Activated naive CD4-positive, alpha-beta T cell treated with anti-CD3 and anti-CD28 coated beads for 36 hours (primary cell): ENCODE measurements at regions of chr6 and their contacts with region 1.

Region 1: DNA sequence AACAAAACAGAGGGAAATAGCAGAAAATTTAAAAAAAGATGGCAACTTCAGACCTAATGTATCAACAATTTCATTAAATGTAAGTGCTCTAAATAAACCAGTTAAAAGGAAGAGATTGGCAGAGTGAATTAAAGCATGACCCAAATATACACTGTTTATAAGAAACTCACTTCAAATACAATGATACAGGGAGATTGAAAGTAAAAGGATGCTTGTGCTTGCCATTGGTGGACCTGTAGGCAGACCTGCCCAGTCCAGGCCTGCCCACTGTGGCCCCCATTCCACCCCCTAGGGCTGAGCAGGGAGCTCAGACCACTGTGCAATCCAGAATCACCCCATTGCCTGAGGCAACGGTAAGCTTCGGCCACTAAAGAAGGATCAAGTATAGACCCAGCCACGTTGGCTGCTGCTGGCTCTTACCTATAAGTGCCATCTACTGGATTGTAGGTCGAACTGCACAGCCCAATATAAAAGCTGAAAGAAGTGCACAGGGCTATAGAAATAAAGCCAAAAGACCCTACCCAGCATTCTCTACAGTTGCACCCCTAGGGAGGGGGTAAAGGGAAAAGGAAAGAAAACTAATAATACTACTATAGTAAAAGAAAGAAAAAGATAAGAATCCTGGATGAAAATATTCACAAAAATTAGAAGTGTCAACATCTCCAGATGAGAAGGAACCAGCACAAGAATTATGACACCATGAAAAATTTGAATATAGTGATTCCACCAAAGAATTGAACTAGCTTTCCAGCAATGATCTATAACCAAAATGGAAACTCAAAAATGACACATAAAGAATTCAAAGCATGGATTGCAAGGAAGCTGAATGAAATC is 36.1 kb downstream of the PSMB1 start:
- DNase-seq: peak; percentile 54
- H3K4me3 Mint-ChIP-seq: peak overlapping the region; percentile 28
- H3K27ac Mint-ChIP-seq: no peak overlapping the region
- H3K4me1 Mint-ChIP-seq: no peaks in the 10 kb centered on the region
- H3K27me3 Mint-ChIP-seq: peaks cover 24% of the 10 kb centered on the region

Region 2: DNA sequence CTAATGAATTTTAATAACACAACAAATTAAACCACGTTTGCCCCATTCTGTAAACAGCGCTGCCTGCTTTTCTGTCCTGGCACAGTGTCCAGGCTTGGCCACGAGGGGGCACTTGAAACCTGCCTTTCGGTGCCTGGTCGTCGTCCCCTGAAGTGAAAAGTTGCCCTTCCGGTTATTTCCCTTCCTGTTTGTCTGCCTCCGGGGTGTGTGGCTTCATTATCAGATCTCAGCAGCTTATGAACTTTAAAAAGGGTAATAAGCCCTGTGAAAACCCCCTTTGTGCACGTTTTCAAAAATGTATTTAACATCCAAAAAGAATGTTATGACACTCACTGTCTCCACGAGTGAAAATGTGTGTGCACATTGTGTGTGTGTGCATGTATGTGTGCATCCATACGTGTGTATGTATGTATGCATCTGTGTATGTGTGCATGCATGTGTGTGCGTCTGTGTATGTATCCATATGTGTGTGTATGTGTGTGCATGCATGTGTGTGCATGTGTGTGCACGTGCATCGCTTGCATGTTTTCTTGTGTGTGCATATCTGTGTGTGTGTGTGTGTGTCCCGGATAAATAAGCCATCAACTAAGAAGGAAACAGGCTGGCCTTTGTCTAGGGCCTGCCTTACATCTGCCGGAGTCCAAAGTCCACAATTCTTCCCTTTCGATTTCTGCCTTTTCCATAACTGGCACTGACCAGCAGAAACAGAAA is 1621.7 kb before region 1 on chr6:
- CTCF ChIA-PET with region 1: interaction called, 3 read pairs
- intact Hi-C with region 1: loop called (anchors 5 kb)
- DNase-seq: peak; percentile 89
- H3K4me3 Mint-ChIP-seq: no peak overlapping the region
- H3K27ac Mint-ChIP-seq: no peak overlapping the region
- H3K4me1 Mint-ChIP-seq: peaks cover 14% of the 10 kb centered on the region
- H3K27me3 Mint-ChIP-seq: no peaks in the 10 kb centered on the region

Region 3: DNA sequence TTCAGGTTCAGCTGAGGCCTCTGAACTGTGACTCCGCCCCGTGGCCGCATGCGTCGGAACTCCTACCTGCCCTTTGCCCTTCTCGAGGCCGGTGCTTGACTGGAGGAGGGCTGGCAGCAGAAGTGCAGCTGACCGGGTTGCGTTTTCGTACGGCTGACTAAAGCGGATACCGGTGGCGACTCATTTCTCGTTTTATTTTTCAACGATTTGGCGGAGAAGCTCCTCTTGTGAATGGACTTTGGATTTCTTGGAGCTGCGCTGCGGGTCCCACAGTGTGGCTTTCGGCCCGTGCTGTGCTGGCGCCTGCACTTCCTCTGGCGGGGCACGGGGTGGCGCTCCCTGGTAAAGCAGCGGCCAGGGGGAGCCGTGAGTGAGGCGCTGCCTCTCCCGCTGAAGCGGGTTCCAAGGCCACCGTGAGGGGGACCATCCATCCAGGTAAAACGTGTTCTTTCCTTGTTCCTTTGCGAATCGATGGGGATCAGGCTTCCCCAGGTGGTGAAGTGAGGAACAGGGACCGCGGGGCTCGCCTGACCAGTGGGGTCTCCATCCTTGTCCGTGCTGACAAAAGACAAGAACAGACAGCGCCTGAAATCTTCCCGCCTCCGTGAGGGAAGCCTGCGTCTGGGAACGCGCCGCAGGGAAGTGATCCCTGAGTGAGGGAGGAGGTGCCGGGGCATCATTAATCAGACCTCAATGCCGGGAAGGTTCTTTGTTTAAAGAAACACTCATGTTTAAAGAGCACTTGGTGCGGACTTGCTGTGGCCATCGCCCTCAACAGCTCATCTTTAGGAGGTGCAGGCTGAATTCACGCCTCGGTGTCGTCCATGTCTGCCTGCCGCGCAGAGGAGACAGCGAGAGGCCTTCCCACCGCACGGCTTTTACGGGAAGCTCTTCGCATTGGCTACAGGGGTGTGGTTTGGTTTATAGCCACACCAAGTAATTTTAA is 726.7 kb before region 1 on chr6:
- CTCF ChIA-PET with region 1: interaction called, 7 read pairs
- intact Hi-C with region 1: loop called (anchors 1 kb)
- DNase-seq: peak; percentile 80
- H3K4me3 Mint-ChIP-seq: peak overlapping the region; percentile 79
- H3K27ac Mint-ChIP-seq: no peak overlapping the region
- H3K4me1 Mint-ChIP-seq: peaks cover 17% of the 10 kb centered on the region
- H3K27me3 Mint-ChIP-seq: peaks cover 24% of the 10 kb centered on the region

Region 4: DNA sequence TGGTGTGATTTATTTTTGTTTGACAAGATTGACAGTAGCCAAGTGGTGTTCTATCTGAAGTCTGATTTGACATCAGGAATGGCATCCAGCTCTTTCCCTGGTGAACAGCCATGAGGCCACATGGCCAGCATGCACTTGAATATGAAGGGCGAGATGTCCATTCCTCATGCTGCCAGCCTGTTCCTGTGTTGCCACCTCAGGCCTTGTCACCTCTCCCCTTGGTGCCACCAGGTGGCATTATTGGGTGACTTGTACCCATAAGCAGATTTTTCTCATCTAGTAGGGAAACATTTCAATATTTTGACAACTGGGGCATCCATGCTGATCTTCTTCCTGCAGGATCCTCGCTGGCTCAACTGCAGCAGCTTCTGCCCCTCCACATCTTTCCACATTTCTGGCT is 566.4 kb before region 1 on chr6:
- CTCF ChIA-PET with region 1: interaction called, 11 read pairs
- intact Hi-C with region 1: loop called (anchors 1 kb)
- DNase-seq: peak; percentile 66
- H3K4me3 Mint-ChIP-seq: no peak overlapping the region
- H3K27ac Mint-ChIP-seq: no peak overlapping the region
- H3K4me1 Mint-ChIP-seq: no peaks in the 10 kb centered on the region
- H3K27me3 Mint-ChIP-seq: no peaks in the 10 kb centered on the region

Region 5: DNA sequence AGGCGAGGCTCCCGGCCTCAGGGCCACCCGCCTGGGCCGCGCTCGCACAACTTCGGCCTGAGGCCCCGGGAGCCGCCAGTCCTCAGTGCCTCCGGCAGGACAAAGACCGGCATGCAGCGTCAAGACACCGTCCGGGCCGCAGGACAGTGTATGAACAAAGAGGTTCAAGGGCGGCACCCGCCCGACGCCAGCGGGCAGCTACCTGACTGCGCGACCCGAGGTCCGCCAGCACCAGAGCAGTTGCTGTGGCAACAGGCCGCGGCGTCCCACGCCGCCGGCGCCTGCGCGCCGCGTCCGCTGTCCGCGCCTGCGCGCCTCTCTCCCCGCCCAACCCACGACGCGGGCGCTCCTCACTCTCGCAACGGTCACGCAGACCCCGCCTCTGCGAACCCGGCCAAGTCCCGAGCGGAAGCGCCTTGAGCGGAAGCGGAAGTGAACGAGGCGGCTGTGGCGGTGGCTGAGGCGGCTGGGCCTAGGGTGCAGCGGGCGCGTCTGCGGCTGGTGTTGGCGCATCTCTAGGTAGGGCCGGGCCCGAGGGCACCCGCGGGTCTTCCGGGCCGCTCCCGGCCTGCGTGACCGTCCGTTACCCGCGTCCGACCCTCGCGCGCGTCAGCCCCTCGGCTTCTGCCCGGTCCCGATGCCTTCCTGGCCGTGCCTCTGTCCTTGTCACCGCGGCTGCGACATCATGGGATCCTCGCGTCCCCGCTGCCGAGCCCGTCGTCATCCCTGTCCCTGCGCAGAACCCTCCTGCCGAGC is 210.5 kb before region 1 on chr6 and contains the start of gene FAM120B:
- CTCF ChIA-PET with region 1: no interaction called
- intact Hi-C with region 1: loop called (anchors 5 kb)
- DNase-seq: peak; percentile 92
- H3K4me3 Mint-ChIP-seq: peak within 1 kb of the TSS; percentile 86
- H3K27ac Mint-ChIP-seq: peak within 1 kb of the TSS; percentile 81
- H3K4me1 Mint-ChIP-seq: peaks cover 36% of the 10 kb centered on the region
- H3K27me3 Mint-ChIP-seq: peaks cover 4% of the 10 kb centered on the region
- total RNA-seq, gene FAM120B: 15.5 to 16.1 TPM

Region 6: DNA sequence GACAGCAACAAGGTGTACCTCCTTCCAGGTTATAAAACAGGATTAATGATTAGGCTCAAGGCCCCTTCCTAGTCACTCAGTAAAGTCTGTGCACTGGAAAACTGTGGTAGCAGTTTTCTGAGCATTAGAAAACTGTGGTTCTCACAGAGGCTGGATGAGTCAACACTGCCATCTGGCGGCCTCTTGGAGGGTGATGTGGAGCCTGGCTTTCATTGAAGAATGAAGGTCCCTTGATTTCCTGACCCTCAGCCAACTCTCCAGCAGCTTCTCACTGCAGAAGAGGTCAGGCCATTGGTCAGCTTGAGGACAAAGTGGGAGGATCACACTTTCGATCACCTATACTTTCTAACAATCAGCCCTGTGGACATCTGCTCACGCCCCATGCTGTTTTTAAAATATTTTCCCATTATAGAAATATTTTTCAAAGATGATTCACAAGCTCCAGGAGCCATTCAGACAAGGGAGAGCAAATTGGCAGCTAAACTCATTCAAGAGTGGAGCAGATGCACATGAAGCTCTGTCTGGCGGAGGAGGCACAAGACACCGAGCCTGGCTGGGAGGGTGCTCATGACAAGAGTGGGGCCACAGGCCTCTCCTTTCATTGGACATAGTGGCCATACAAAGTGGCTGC is 13.0 kb after region 1 on chr6:
- CTCF ChIA-PET with region 1: interaction called, 20 read pairs
- intact Hi-C with region 1: no loop called
- DNase-seq: peak; percentile 84
- H3K4me3 Mint-ChIP-seq: no peak overlapping the region
- H3K27ac Mint-ChIP-seq: no peak overlapping the region
- H3K4me1 Mint-ChIP-seq: no peaks in the 10 kb centered on the region
- H3K27me3 Mint-ChIP-seq: no peaks in the 10 kb centered on the region

Region 7: DNA sequence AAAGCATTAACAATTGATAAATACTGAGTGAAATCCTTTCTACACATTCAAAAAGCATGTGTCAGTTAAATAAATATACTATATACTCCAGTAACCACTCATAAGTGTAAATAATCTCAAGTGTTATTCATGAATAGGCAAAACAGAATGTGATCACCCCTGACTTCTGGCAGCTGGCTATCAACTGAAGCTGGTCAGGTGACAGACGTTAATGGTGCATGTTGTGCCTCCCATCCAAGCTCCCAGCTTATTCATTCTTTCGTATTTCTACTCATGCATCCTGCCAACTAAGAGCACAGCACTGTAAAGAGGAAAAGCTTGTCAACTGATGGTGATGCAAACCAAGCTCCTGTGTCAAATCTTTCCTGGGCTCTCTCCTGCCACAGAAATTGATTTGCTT is 28.4 kb after region 1 on chr6:
- CTCF ChIA-PET with region 1: no interaction called
- intact Hi-C with region 1: no loop called
- DNase-seq: no peak
- H3K4me3 Mint-ChIP-seq: no peak overlapping the region
- H3K27ac Mint-ChIP-seq: no peak overlapping the region
- H3K4me1 Mint-ChIP-seq: peaks cover 52% of the 10 kb centered on the region
- H3K27me3 Mint-ChIP-seq: no peaks in the 10 kb centered on the region